Activated T-helper 1 cell treated with anti-CD3 and anti-CD28 coated beads, Interleukin-12 subunit alpha, Interleukin-12 subunit beta, Interleukin-2, Interleukin-4 antibody, amounts not matched to agents 30 ng/mL and 10 ng/mL and 1 ng/mL, durations not matched to agents 14 hours and 24 hours and 36 hours (primary cell): ENCODE measurements at regions of chr1 and their contacts with region 1.

Region 1: DNA sequence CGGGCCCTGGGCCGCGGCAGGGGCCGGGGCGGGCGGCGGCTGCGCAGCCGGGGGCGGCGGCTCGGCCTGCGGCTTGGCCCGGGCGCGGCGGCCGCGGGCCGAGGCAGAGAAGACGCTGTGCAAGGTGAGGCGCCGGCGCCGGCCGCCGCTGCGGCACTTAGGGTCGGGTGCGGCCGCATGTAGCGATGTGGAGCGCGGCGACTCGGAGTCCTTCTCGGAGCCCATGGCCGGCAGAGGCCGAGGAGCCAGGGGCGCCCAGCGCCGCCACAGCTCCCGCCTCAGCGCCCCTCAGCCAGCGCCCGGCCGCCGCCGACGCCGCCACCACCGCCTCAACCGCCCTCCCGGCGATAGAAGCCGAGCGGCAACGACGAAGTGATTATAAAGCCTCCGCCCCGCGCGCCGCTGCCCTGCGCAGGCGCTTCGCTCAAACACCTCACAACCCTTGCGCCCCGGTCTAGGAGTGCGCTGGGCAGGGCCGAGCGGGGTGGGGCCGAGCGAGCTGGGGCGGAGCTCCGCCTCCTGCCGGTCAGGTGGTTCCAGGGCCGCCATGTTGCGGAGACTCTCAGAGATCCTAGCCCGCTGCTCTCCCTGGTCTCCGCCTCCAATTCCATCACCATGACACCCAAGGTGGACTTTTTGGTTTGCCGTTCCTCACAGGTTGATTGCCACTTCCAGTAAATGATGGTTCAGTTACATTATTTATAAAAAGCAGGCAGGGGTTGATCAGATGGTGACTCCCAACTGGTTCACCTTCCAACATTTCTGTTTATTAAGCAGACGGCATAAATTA is at the start of gene RNF19B:
- DNase-seq: peak; percentile 94
- H3K4me3 Mint-ChIP-seq: peak within 1 kb of the TSS; percentile 84
- H3K27ac Mint-ChIP-seq: peak within 1 kb of the TSS; percentile 86
- H3K4me1 Mint-ChIP-seq: peaks cover 58% of the 10 kb centered on the region
- H3K27me3 Mint-ChIP-seq: peaks cover 1% of the 10 kb centered on the region
- total RNA-seq, gene RNF19B: 52.1 and 56.5 TPM in 2 replicates

Region 2: GRCh38 chr1:32892368-32893197 is 72.1 kb before region 1 on chr1:
- intact Hi-C with region 1: no loop called
- DNase-seq: no peak
- H3K4me3 Mint-ChIP-seq: peak overlapping the region; percentile 19
- H3K27ac Mint-ChIP-seq: no peak overlapping the region
- H3K4me1 Mint-ChIP-seq: peaks cover 9% of the 10 kb centered on the region
- H3K27me3 Mint-ChIP-seq: peaks cover 58% of the 10 kb centered on the region

Region 3: DNA sequence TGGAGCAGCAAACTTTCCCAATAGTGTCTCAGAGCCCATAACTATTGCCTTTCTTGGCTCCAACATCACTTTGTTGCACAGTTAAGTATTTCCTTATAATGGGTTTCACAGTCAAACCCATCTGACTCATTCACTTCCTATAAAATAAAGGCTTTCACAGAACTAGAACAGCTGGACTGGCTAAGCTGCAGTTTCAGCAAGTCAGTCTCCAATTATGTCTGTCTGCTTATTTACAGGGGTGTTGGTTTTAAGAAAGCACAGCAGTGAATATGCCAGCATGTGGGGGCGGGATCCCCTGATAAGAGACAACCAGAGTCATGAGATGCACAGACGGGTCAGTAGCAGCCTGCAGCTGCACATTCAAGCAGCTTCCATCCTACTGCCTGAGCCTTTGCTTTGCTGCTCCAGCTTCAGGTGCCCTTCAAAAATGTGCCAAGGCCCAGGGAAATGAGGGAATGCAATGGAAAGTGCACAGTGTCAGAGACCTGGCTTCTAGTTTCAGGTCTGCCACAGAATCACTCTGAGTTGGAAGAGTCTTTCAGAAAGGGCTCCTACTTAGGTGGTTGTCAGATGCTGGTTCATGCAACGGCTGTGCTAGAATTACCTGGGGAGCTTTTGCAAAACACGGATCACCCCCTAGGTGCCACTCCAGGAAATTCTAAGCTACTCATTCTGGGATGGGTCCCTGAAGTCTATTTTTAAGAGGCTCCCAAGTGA is 24.8 kb before region 1 on chr1:
- intact Hi-C with region 1: loop called (anchors 2 kb)
- DNase-seq: no peak
- H3K4me3 Mint-ChIP-seq: peak overlapping the region; percentile 44
- H3K27ac Mint-ChIP-seq: peak overlapping the region; percentile 59
- H3K4me1 Mint-ChIP-seq: peaks cover 70% of the 10 kb centered on the region
- H3K27me3 Mint-ChIP-seq: no peaks in the 10 kb centered on the region

Region 4: GRCh38 chr1:32981003-32981901 is 16.6 kb after region 1 on chr1:
- intact Hi-C with region 1: loop called (anchors 1 kb)
- DNase-seq: peak; percentile 65
- H3K4me3 Mint-ChIP-seq: peak overlapping the region; percentile 60
- H3K27ac Mint-ChIP-seq: peak overlapping the region; percentile 85
- H3K4me1 Mint-ChIP-seq: peaks cover 81% of the 10 kb centered on the region
- H3K27me3 Mint-ChIP-seq: no peaks in the 10 kb centered on the region

Region 5: DNA sequence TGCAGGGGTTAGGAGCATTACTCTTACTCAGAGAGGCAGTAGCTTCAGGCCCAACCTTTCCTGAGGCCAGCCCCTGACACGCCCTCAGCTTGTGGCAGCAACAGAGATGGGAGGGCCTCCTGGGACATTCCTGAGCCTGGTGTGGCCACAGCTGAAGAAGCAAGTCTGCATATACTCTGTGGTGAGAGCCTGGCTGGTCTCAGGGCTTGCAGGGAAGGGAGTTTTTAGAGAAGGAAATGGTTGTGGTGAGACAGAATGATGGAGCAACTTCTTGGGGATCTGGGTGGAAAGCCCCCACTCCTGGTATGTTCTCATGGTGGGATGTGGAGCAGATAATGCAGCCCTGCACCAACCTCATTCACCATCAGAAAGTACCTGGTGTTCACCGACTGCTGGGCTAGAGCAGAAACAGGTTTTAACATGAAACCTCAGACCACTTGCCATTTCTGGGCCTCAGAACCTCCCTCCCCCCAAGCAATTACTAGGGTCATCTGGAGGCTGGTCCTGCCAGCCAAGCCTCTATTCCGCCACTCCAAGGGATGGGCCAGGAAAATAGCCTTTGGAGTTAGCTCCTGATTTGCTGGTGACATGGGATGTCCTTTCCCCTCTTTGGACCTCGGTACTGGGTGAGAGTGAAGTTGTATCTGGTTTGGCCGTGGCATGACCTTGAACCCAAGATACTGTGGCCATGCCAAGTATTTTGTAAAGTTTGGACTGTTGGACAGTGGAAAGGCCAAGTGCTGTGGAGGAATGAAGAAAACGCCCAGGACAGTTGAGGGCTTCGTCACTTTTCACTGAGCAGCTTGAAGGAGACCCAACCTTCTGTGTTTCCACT is 28.1 kb after region 1 on chr1:
- intact Hi-C with region 1: loop called (anchors 1 kb)
- DNase-seq: peak; percentile 81
- H3K4me3 Mint-ChIP-seq: peak overlapping the region; percentile 31
- H3K27ac Mint-ChIP-seq: peak overlapping the region; percentile 87
- H3K4me1 Mint-ChIP-seq: peaks cover 83% of the 10 kb centered on the region
- H3K27me3 Mint-ChIP-seq: no peaks in the 10 kb centered on the region

Region 6: GRCh38 chr1:33007190-33008050 is 42.8 kb after region 1 on chr1:
- intact Hi-C with region 1: loop called (anchors 1 kb)
- DNase-seq: peak; percentile 27
- H3K4me3 Mint-ChIP-seq: no peak overlapping the region
- H3K27ac Mint-ChIP-seq: no peak overlapping the region
- H3K4me1 Mint-ChIP-seq: peaks cover 53% of the 10 kb centered on the region
- H3K27me3 Mint-ChIP-seq: no peaks in the 10 kb centered on the region

Region 7: GRCh38 chr1:33036526-33037503 is 72.2 kb after region 1 on chr1 and contains the start of gene AK2:
- intact Hi-C with region 1: loop called (anchors 1 kb)
- DNase-seq: peak; percentile 91
- H3K4me3 Mint-ChIP-seq: peak within 1 kb of the TSS; percentile 91
- H3K27ac Mint-ChIP-seq: peak within 1 kb of the TSS; percentile 90
- H3K4me1 Mint-ChIP-seq: peaks cover 48% of the 10 kb centered on the region
- H3K27me3 Mint-ChIP-seq: no peaks in the 10 kb centered on the region
- total RNA-seq, gene AK2: 387 and 400 TPM in 2 replicates